Activated B cell treated with CpG ODN at 0.5 μM for 24 hours (primary cell): ENCODE measurements at regions of chr4 and their contacts with region 1.

Region 1: DNA sequence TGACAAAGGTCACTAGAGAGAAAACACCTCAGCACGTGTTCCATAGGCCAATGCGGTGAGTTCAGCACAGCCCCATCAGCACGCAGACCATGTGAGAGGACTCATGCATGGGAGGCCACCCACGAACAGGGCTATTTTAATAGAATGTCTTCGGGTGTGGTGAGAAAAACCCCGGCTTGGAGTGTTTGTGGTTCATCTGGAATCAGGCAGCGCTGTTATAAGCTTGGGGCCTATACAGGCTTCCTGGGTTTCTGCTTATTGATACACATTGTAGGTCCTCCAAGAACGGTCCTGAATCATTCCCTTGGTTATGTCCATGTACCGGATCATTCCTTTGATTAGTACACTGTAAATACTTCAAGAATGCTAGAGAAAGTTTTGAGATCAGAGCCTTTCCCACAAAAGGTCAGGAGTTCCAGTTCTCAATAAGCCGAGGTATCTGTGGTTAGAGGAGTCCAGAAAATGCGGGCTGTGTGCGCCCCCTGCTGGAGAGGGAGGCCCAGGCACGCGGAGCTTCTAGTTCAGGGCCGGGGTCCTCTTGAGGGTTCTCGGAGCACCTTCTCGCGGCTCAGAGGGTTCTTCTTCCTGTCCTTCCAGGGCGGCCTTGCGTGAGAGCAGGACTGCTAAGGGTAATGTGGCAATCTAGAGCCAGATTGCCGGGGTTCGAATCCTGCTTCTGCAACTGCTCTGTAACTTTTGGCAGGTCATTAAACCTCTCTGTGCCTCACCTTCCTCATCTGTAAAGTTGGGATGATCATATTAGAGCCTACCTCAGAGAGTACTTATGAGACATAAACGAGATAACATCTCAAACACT is 51.8 kb downstream of the TLR10 start:
- DNase-seq: peak; percentile 74
- ATAC-seq: peak; percentile 89
- H3K4me3 Mint-ChIP-seq: peak overlapping the region; percentile 48
- H3K27ac Mint-ChIP-seq: peak overlapping the region; percentile 65
- H3K4me1 Mint-ChIP-seq: peaks cover 31% of the 10 kb centered on the region
- H3K27me3 Mint-ChIP-seq: no peaks in the 10 kb centered on the region
- CTCF ChIP-seq: no peak

Region 2: DNA sequence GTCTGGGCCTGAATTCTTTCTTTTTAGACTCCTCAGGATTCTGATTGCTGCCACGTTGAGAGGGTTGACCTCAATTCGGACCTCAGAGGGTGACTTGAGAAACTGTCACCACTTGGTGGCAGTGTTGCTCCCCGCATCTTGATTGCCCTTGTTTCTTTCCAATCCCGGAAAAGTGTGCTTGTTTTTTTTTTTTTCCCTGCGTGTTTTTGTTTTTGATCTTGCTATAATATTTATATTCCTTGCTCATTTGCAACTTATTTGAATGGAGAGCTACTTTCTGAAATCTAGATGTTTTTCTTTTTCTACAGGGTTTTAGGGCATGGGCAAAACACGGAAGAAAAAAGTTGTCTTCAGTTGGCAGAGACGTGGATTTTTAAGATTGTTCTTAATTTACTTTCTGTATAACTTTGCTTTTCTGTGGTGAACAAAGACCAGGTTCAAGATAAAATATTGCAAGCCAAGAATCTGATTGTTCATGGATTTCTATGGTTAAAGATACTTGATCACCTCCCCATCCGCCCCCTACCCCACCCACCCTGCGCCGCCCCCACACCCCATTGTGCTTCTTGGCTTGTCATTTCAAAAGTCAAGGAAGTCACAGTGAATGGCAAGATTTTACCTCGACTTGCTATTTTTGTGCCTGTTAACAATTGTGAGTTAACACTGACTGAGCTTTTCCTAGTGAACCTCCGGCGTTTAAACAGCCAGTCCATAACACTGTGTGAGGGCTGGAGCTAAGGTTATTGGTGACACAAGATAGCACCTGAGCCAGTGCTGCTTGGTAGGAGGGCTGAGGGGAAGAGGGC is 668.7 kb before region 1 on chr4:
- CTCF ChIA-PET with region 1: interaction called, 3 read pairs
- POLR2A ChIA-PET with region 1: no interaction called
- intact Hi-C with region 1: loop called (anchors 1 kb)
- DNase-seq: no peak
- ATAC-seq: peak; percentile 49
- H3K4me3 Mint-ChIP-seq: peak overlapping the region; percentile 57
- H3K27ac Mint-ChIP-seq: no peak overlapping the region
- H3K4me1 Mint-ChIP-seq: peaks cover 14% of the 10 kb centered on the region
- H3K27me3 Mint-ChIP-seq: no peaks in the 10 kb centered on the region
- CTCF ChIP-seq: peak; percentile 81

Region 3: GRCh38 chr4:38319456-38320342 is 411.3 kb before region 1 on chr4:
- CTCF ChIA-PET with region 1: interaction called, 5 read pairs
- POLR2A ChIA-PET with region 1: interaction called, 3 read pairs
- intact Hi-C with region 1: loop called (anchors 1 kb)
- DNase-seq: peak; percentile 84
- ATAC-seq: peak; percentile 77
- H3K4me3 Mint-ChIP-seq: peak overlapping the region; percentile 78
- H3K27ac Mint-ChIP-seq: peak overlapping the region; percentile 88
- H3K4me1 Mint-ChIP-seq: peaks cover 28% of the 10 kb centered on the region
- H3K27me3 Mint-ChIP-seq: no peaks in the 10 kb centered on the region
- CTCF ChIP-seq: peak; percentile 72

Region 4: GRCh38 chr4:38696697-38697096 is 34.3 kb before region 1 on chr4:
- CTCF ChIA-PET with region 1: interaction called, 3 read pairs
- POLR2A ChIA-PET with region 1: no interaction called
- intact Hi-C with region 1: loop called (anchors 2 kb)
- DNase-seq: no peak
- ATAC-seq: no peak
- H3K4me3 Mint-ChIP-seq: no peak overlapping the region
- H3K27ac Mint-ChIP-seq: no peak overlapping the region
- H3K4me1 Mint-ChIP-seq: no peaks in the 10 kb centered on the region
- H3K27me3 Mint-ChIP-seq: no peaks in the 10 kb centered on the region
- CTCF ChIP-seq: no peak